ENCODE measurements at regions of chr3 and their contacts with region 1.

Region 1: GRCh38 chr3:12135029-12135657 is 23.6 kb downstream of the TIMP4 start:
- DNase-seq: no peak
- H3K4me3 ChIP-seq: no peak overlapping the region
- H3K27ac ChIP-seq: no peak overlapping the region
- H3K4me1 ChIP-seq: no peaks in the 10 kb centered on the region
- H3K27me3 ChIP-seq: no peaks in the 10 kb centered on the region
- CTCF ChIP-seq: peak; percentile 83 to 85 (median 85)
- POLR2A ChIP-seq: no peak

Region 2: GRCh38 chr3:12073106-12073505 is 62.0 kb before region 1 on chr3:
- intact Hi-C with region 1: no loop called
- DNase-seq: no peak
- H3K4me3 ChIP-seq: no peak overlapping the region
- H3K27ac ChIP-seq: no peak overlapping the region
- H3K4me1 ChIP-seq: no peaks in the 10 kb centered on the region
- H3K27me3 ChIP-seq: no peaks in the 10 kb centered on the region
- CTCF ChIP-seq: no peak
- POLR2A ChIP-seq: no peak

Region 3: GRCh38 chr3:12155823-12156222 is 20.7 kb after region 1 on chr3:
- intact Hi-C with region 1: no loop called
- DNase-seq: no peak
- H3K4me3 ChIP-seq: no peak overlapping the region
- H3K27ac ChIP-seq: no peak overlapping the region
- H3K4me1 ChIP-seq: peaks cover 9% of the 10 kb centered on the region
- H3K27me3 ChIP-seq: no peaks in the 10 kb centered on the region
- CTCF ChIP-seq: no peak
- POLR2A ChIP-seq: no peak

Region 4: DNA sequence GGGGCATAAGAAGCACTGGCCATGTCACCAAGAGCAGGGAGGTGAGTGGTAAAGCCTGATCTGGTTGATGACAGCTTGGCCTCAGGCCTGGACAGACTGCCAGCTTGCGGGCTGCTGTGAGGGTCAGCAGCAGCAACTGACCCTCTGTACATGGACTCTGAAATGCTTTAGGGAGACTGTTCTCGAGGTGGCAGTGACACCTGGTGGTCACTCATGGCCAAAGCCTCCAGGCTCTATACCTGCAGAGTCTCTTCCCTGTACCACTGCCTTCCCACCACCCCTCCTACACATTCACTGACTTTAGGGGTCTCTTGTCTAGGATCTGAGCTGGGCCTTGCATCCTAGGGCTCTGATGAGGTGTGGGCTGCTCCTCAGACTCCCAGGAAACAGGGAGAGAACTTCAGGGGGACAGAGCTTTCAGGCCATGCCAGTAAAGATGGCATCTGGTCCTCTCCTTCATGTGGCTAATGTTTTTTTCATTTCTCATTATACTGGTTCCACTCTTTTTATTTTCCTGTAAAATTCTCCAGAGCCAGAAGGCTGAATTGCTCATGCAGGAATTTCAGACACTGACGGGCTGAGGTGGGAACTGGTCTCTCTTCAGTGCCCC is 40.8 kb after region 1 on chr3:
- intact Hi-C with region 1: loop called (anchors 5 kb)
- DNase-seq: no peak
- H3K4me3 ChIP-seq: no peak overlapping the region
- H3K27ac ChIP-seq: no peak overlapping the region
- H3K4me1 ChIP-seq: peaks cover 7% of the 10 kb centered on the region
- H3K27me3 ChIP-seq: no peaks in the 10 kb centered on the region
- CTCF ChIP-seq: peak; percentile 56 to 62 (median 60)
- POLR2A ChIP-seq: no peak

Region 5: DNA sequence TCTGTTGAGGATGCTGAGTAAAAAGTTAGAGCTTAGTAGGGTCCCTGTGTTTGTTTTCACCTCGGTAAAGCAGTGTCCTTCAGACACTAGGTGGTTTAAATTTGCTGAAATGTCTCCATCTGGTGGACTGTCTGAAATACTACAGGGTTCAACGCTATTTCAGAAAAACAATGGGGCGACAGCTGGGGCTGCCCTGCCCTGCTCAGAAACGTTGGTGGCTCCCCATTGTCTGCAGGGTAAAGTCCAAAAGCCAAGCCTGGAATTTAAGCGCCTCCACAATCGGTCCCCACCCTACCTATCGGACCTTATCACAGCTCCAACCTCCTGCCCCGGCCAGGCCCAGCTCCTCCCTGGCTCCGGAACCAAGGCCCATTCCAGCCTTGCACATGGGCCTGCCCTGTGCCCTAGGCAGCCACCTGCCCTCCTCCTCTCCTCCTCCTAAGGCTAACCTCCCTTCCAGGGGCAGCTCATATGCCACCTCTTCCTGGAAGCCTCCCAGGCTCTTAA is 344.8 kb after region 1 on chr3:
- intact Hi-C with region 1: loop called (anchors 2 kb)
- DNase-seq: no peak
- H3K4me3 ChIP-seq: no peak overlapping the region
- H3K27ac ChIP-seq: no peak overlapping the region
- H3K4me1 ChIP-seq: peaks cover 28% of the 10 kb centered on the region
- H3K27me3 ChIP-seq: no peaks in the 10 kb centered on the region
- CTCF ChIP-seq: peak; percentile 75 to 86 (median 84)
- POLR2A ChIP-seq: no peak